Activated naive CD4-positive, alpha-beta T cell treated with anti-CD3 and anti-CD28 coated beads for 36 hours (primary cell): ENCODE measurements at regions of chrX and their contacts with region 1.

Region 1: GRCh38 chrX:35351795-35352483 is 409.3 kb downstream of the FAM47B start:
- DNase-seq: no peak
- H3K4me3 Mint-ChIP-seq: no peak overlapping the region
- H3K27ac Mint-ChIP-seq: no peak overlapping the region
- H3K4me1 Mint-ChIP-seq: no peaks in the 10 kb centered on the region
- H3K27me3 Mint-ChIP-seq: no peaks in the 10 kb centered on the region

Region 2: DNA sequence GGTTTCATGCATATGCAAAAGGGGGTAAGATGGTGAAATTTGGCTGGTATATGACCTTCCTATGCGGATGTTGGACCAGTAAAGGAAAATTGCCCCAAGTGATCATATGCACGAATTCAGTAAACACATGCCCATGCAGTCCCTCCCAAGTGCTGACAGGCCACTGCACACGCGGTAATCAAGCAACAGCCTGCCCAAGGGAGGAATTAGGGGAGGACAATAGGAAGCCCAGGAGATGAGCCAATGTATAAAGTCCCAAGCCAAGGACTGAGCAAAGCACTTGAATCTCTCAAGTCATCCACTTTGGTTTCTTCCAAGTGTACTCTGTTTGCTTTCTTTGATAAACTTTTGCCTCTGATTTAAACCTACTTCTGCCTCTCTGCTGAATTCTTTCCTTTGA is 467.3 kb after region 1 on chrX:
- CTCF ChIA-PET with region 1: no interaction called
- intact Hi-C with region 1: no loop called
- DNase-seq: no peak
- H3K4me3 Mint-ChIP-seq: no peak overlapping the region
- H3K27ac Mint-ChIP-seq: no peak overlapping the region
- H3K4me1 Mint-ChIP-seq: no peaks in the 10 kb centered on the region
- H3K27me3 Mint-ChIP-seq: no peaks in the 10 kb centered on the region

Region 3: DNA sequence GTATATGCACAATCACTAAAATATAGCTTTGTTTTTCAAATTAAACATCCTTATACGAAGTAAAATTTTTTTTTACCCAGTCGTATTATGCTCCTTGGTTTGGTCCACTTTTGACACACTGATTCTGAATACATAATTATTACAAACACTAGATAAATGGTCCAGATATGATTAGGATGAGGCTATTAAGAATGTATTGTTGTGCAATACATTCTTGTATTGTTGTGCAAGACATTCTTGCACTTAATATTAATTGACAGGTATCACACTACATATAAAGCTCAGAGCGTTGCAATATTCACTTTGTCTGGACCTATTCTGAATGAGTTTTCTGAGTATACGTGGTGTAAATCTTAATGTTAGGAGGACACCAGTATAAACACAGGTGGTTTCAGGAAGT is 1031.6 kb after region 1 on chrX:
- CTCF ChIA-PET with region 1: no interaction called
- intact Hi-C with region 1: loop called (anchors 10 kb)
- DNase-seq: no peak
- H3K4me3 Mint-ChIP-seq: no peak overlapping the region
- H3K27ac Mint-ChIP-seq: no peak overlapping the region
- H3K4me1 Mint-ChIP-seq: no peaks in the 10 kb centered on the region
- H3K27me3 Mint-ChIP-seq: no peaks in the 10 kb centered on the region